ENCODE measurements at regions of chr5 and their contacts with region 1.

Region 1: GRCh38 chr5:150582241-150583109 is 58.0 kb upstream of the SYNPO start:
- DNase-seq: peak; percentile 88 to 94
- H3K4me3 ChIP-seq: peak overlapping the region; percentile 32
- H3K4me3 Mint-ChIP-seq: peak overlapping the region; percentile 75
- H3K27ac Mint-ChIP-seq: peak overlapping the region; percentile 91
- H3K4me1 ChIP-seq: peaks cover 57% of the 10 kb centered on the region
- H3K4me1 Mint-ChIP-seq: peaks cover 17% of the 10 kb centered on the region
- H3K27me3 ChIP-seq: no peaks in the 10 kb centered on the region
- H3K27me3 Mint-ChIP-seq: no peaks in the 10 kb centered on the region
- CTCF ChIP-seq: no peak

Region 2: GRCh38 chr5:150143350-150144245 is 438.9 kb before region 1 on chr5:
- CTCF ChIA-PET with region 1: no interaction called
- POLR2A ChIA-PET with region 1: no interaction called
- intact Hi-C with region 1: no loop called
- DNase-seq: peak; percentile 34 to 69
- H3K4me3 ChIP-seq: no peak overlapping the region
- H3K4me3 Mint-ChIP-seq: peak overlapping the region; percentile 37
- H3K27ac Mint-ChIP-seq: peak overlapping the region; percentile 92
- H3K4me1 ChIP-seq: peaks cover 72% of the 10 kb centered on the region
- H3K4me1 Mint-ChIP-seq: peaks cover 66% of the 10 kb centered on the region
- H3K27me3 ChIP-seq: no peaks in the 10 kb centered on the region
- H3K27me3 Mint-ChIP-seq: no peaks in the 10 kb centered on the region
- CTCF ChIP-seq: no peak

Region 3: GRCh38 chr5:150209020-150209635 is 373.3 kb before region 1 on chr5:
- CTCF ChIA-PET with region 1: no interaction called
- POLR2A ChIA-PET with region 1: no interaction called
- intact Hi-C with region 1: no loop called
- DNase-seq: no peak
- H3K4me3 ChIP-seq: no peak overlapping the region
- H3K4me3 Mint-ChIP-seq: no peak overlapping the region
- H3K27ac Mint-ChIP-seq: no peak overlapping the region
- H3K4me1 ChIP-seq: peaks cover 12% of the 10 kb centered on the region
- H3K4me1 Mint-ChIP-seq: peaks cover 29% of the 10 kb centered on the region
- H3K27me3 ChIP-seq: no peaks in the 10 kb centered on the region
- H3K27me3 Mint-ChIP-seq: no peaks in the 10 kb centered on the region
- CTCF ChIP-seq: no peak

Region 4: GRCh38 chr5:150546228-150546654 is 36.2 kb before region 1 on chr5:
- CTCF ChIA-PET with region 1: no interaction called
- POLR2A ChIA-PET with region 1: no interaction called
- intact Hi-C with region 1: no loop called
- DNase-seq: no peak
- H3K4me3 ChIP-seq: no peak overlapping the region
- H3K4me3 Mint-ChIP-seq: no peak overlapping the region
- H3K27ac Mint-ChIP-seq: no peak overlapping the region
- H3K4me1 ChIP-seq: peaks cover 32% of the 10 kb centered on the region
- H3K4me1 Mint-ChIP-seq: peaks cover 22% of the 10 kb centered on the region
- H3K27me3 ChIP-seq: no peaks in the 10 kb centered on the region
- H3K27me3 Mint-ChIP-seq: no peaks in the 10 kb centered on the region
- CTCF ChIP-seq: no peak

Region 5: DNA sequence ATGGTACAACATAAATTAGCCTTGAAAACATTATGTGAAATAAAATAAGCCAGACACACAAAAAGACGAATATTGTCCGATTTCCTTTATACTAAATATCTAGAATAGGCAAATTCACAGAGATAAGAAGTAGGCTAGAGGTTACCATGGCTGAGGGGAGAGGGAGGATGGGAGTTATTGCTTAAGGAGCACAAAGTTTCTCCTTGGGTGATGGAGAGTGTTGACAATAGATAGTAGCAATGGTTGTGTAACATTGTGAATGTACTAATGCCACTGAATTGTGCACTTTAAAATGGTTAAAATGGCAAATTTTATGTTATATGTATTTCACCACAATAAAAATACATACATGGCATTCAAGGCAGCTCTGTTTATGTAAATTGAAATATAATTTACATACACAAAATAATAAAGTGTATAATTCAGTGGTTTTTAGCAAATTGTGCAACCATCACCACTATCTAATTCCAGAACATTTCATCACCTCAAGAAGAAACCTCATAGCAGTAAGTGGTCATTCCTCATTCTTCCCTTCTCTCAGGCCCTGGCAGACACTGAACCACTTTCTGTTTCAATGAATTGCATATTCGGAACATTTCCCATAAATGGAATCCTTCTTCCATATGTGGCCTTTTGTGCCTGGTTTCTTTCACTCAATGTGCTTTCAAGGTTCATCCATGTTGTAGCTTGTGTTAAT is 15.3 kb before region 1 on chr5:
- CTCF ChIA-PET with region 1: interaction called, 15 read pairs
- POLR2A ChIA-PET with region 1: no interaction called
- intact Hi-C with region 1: loop called (anchors 1 kb)
- DNase-seq: peak in 1 of 2 experiments; percentile 54
- H3K4me3 ChIP-seq: no peak overlapping the region
- H3K4me3 Mint-ChIP-seq: no peak overlapping the region
- H3K27ac Mint-ChIP-seq: peak overlapping the region; percentile 31
- H3K4me1 ChIP-seq: peaks cover 24% of the 10 kb centered on the region
- H3K4me1 Mint-ChIP-seq: peaks cover 22% of the 10 kb centered on the region
- H3K27me3 ChIP-seq: no peaks in the 10 kb centered on the region
- H3K27me3 Mint-ChIP-seq: no peaks in the 10 kb centered on the region
- CTCF ChIP-seq: no peak

Region 6: GRCh38 chr5:150595466-150596031 is 13.1 kb after region 1 on chr5:
- CTCF ChIA-PET with region 1: no interaction called
- POLR2A ChIA-PET with region 1: no interaction called
- intact Hi-C with region 1: loop called (anchors 1 kb)
- DNase-seq: peak in 1 of 2 experiments; percentile 40
- H3K4me3 ChIP-seq: no peak overlapping the region
- H3K4me3 Mint-ChIP-seq: no peak overlapping the region
- H3K27ac Mint-ChIP-seq: peak overlapping the region; percentile 81
- H3K4me1 ChIP-seq: peaks cover 43% of the 10 kb centered on the region
- H3K4me1 Mint-ChIP-seq: peaks cover 30% of the 10 kb centered on the region
- H3K27me3 ChIP-seq: no peaks in the 10 kb centered on the region
- H3K27me3 Mint-ChIP-seq: no peaks in the 10 kb centered on the region
- CTCF ChIP-seq: no peak

Region 7: DNA sequence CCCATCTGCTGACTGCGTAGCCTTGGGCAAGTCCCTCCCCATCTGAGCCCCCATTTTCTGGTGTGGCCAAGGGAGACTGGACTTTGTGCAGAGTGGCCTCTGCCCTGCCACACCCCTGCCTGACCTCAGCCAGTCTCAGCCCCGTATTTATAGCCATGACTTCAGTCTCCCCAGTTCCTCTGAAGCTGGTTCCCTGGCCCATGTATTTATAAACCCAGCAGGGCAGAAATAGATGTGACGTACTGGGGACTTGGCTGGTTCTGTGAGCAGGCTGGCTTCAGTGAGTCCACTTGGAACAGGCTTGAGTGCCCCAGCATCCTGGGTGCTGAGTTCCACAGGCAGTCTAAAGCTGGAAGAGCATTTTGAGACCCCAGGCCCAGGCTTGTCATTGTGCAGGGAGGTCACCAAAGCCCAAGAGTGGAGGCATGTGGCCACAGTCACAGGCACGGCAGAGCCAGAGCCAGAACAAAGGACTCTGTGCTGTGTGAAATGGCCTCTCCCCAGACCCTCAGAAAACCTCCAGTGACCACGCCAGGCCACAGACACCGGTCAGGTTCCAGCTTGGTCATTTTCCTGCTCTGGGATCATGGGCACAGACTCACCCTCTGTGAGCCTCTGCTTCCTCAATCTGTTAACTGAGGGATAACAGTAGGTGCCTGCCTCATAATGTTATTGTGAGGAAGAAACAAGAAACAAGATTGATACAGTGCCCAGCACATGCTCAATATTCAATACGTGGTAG is 27.5 kb after region 1 on chr5:
- CTCF ChIA-PET with region 1: no interaction called
- POLR2A ChIA-PET with region 1: no interaction called
- intact Hi-C with region 1: loop called (anchors 2 kb)
- DNase-seq: peak; percentile 34 to 52
- H3K4me3 ChIP-seq: no peak overlapping the region
- H3K4me3 Mint-ChIP-seq: no peak overlapping the region
- H3K27ac Mint-ChIP-seq: no peak overlapping the region
- H3K4me1 ChIP-seq: peaks cover 32% of the 10 kb centered on the region
- H3K4me1 Mint-ChIP-seq: peaks cover 9% of the 10 kb centered on the region
- H3K27me3 ChIP-seq: no peaks in the 10 kb centered on the region
- H3K27me3 Mint-ChIP-seq: no peaks in the 10 kb centered on the region
- CTCF ChIP-seq: no peak

Region 8: GRCh38 chr5:150640311-150641005 is 58.0 kb after region 1 on chr5 and contains the start of gene SYNPO:
- CTCF ChIA-PET with region 1: interaction called, 7 read pairs
- POLR2A ChIA-PET with region 1: interaction called, 4 read pairs
- intact Hi-C with region 1: loop called (anchors 1 kb)
- DNase-seq: peak; percentile 56 to 60
- H3K4me3 ChIP-seq: peak within 1 kb of the TSS; percentile 33
- H3K4me3 Mint-ChIP-seq: peak within 1 kb of the TSS; percentile 61
- H3K27ac Mint-ChIP-seq: peak within 1 kb of the TSS; percentile 79
- H3K4me1 ChIP-seq: peaks cover 80% of the 10 kb centered on the region
- H3K4me1 Mint-ChIP-seq: peaks cover 52% of the 10 kb centered on the region
- H3K27me3 ChIP-seq: no peaks in the 10 kb centered on the region
- H3K27me3 Mint-ChIP-seq: no peaks in the 10 kb centered on the region
- CTCF ChIP-seq: no peak
- total RNA-seq, gene SYNPO: 22.4 and 25.1 TPM in 2 replicates

Measured in Caco-2 (cell line).